B cell (primary cell): ENCODE measurements at regions of chr3 and their contacts with region 1.

Region 1: GRCh38 chr3:58630076-58630709 is 36.4 kb downstream of the FAM3D start:
- DNase-seq: peak; percentile 71
- ATAC-seq: peak; percentile 76
- H3K4me3 ChIP-seq: no peak overlapping the region
- H3K4me3 Mint-ChIP-seq: no peak overlapping the region
- H3K27ac ChIP-seq: no peak overlapping the region
- H3K27ac Mint-ChIP-seq: no peak overlapping the region
- H3K4me1 ChIP-seq: peaks cover 0 to 6% of the 10 kb centered on the region in 2 donors
- H3K4me1 Mint-ChIP-seq: no peaks in the 10 kb centered on the region
- H3K27me3 ChIP-seq: peaks cover 0 to 19% (median 0%) of the 10 kb centered on the region in 4 experiments
- H3K27me3 Mint-ChIP-seq: peaks cover 18% of the 10 kb centered on the region
- CTCF ChIP-seq: peak; percentile 92

Region 2: GRCh38 chr3:58324391-58325390 is 305.5 kb before region 1 on chr3:
- CTCF ChIA-PET with region 1: interaction called, 6 read pairs
- POLR2A ChIA-PET with region 1: no interaction called
- intact Hi-C with region 1: loop called (anchors 5 kb)
- DNase-seq: no peak
- ATAC-seq: peak; percentile 39
- H3K4me3 ChIP-seq: no peak overlapping the region
- H3K4me3 Mint-ChIP-seq: peak overlapping the region; percentile 57
- H3K27ac ChIP-seq: peak overlapping the region in 1 of 2 donors; percentile 62
- H3K27ac Mint-ChIP-seq: peak overlapping the region; percentile 74
- H3K4me1 ChIP-seq: peaks cover 21 to 29% of the 10 kb centered on the region in 2 donors
- H3K4me1 Mint-ChIP-seq: peaks cover 38% of the 10 kb centered on the region
- H3K27me3 ChIP-seq: no peaks in the 10 kb centered on the region
- H3K27me3 Mint-ChIP-seq: no peaks in the 10 kb centered on the region
- CTCF ChIP-seq: no peak

Region 3: GRCh38 chr3:58568572-58569286 is 61.5 kb before region 1 on chr3:
- CTCF ChIA-PET with region 1: interaction called, 85 read pairs
- POLR2A ChIA-PET with region 1: no interaction called
- intact Hi-C with region 1: loop called (anchors 1 kb)
- DNase-seq: peak; percentile 70
- ATAC-seq: peak; percentile 56
- H3K4me3 ChIP-seq: peak overlapping the region in 2 of 5 experiments; percentile 11 to 15
- H3K4me3 Mint-ChIP-seq: peak overlapping the region; percentile 80
- H3K27ac ChIP-seq: no peak overlapping the region
- H3K27ac Mint-ChIP-seq: no peak overlapping the region
- H3K4me1 ChIP-seq: peaks cover 4 to 6% of the 10 kb centered on the region in 2 donors
- H3K4me1 Mint-ChIP-seq: peaks cover 7% of the 10 kb centered on the region
- H3K27me3 ChIP-seq: no peaks in the 10 kb centered on the region
- H3K27me3 Mint-ChIP-seq: no peaks in the 10 kb centered on the region
- CTCF ChIP-seq: peak; percentile 98

Region 4: DNA sequence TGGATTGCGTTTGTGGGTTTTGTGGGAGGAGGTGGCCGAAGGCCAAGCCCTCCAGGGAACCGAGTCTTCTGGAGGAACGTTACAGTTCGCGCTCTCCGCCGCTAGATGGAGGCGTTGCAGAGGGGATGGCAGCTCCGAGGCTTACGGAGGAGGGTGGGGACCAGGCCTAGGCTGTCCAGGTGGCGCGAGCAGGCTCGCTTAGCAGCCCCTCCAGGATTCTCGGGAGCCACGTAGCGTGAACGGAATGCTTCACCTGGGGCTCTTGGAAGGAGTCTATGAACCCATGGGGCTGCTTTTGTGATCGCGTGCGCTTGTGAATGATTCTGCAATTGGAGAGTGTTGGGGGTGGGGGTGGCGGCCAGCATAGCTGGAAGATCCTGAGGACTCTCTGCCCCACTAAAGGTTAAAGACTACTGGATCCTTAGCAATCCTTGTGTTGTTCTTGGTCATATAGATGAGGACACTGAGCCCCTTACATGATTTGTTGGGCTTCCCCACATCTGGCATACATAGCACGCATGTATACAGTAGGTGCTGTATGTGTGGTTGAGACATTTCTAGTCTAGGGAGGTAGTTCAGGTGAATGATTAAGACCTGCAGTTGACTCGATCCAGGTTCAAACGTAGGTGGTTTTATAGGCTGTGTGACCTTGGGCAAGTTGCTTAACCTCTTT is 10.6 kb after region 1 on chr3:
- CTCF ChIA-PET with region 1: interaction called, 39 read pairs
- POLR2A ChIA-PET with region 1: no interaction called
- intact Hi-C with region 1: no loop called
- DNase-seq: peak; percentile 65
- ATAC-seq: peak; percentile 82
- H3K4me3 ChIP-seq: no peak overlapping the region
- H3K4me3 Mint-ChIP-seq: no peak overlapping the region
- H3K27ac ChIP-seq: no peak overlapping the region
- H3K27ac Mint-ChIP-seq: peak overlapping the region; percentile 20
- H3K4me1 ChIP-seq: peaks cover 0 to 5% of the 10 kb centered on the region in 2 donors
- H3K4me1 Mint-ChIP-seq: peaks cover 10% of the 10 kb centered on the region
- H3K27me3 ChIP-seq: no peaks in the 10 kb centered on the region
- H3K27me3 Mint-ChIP-seq: peaks cover 8% of the 10 kb centered on the region
- CTCF ChIP-seq: peak; percentile 82